Activated CD4-positive, alpha-beta memory T cell treated with anti-CD3 and anti-CD28 coated beads for 36 hours (primary cell): ENCODE measurements at regions of chr5 and their contacts with region 1.

Region 1: GRCh38 chr5:7868773-7869473 is at the starts of genes FASTKD3 and MTRR:
- DNase-seq: peak; percentile 93
- H3K4me3 Mint-ChIP-seq: peak within 1 kb of the TSS; percentile 94
- H3K27ac Mint-ChIP-seq: peak within 1 kb of the TSS; percentile 80
- H3K4me1 Mint-ChIP-seq: peaks cover 72% of the 10 kb centered on the region
- H3K27me3 Mint-ChIP-seq: no peaks in the 10 kb centered on the region
- total RNA-seq, gene FASTKD3: 6.9 to 7.5 TPM
- total RNA-seq, gene MTRR: 45.2 to 47.1 TPM

Region 2: DNA sequence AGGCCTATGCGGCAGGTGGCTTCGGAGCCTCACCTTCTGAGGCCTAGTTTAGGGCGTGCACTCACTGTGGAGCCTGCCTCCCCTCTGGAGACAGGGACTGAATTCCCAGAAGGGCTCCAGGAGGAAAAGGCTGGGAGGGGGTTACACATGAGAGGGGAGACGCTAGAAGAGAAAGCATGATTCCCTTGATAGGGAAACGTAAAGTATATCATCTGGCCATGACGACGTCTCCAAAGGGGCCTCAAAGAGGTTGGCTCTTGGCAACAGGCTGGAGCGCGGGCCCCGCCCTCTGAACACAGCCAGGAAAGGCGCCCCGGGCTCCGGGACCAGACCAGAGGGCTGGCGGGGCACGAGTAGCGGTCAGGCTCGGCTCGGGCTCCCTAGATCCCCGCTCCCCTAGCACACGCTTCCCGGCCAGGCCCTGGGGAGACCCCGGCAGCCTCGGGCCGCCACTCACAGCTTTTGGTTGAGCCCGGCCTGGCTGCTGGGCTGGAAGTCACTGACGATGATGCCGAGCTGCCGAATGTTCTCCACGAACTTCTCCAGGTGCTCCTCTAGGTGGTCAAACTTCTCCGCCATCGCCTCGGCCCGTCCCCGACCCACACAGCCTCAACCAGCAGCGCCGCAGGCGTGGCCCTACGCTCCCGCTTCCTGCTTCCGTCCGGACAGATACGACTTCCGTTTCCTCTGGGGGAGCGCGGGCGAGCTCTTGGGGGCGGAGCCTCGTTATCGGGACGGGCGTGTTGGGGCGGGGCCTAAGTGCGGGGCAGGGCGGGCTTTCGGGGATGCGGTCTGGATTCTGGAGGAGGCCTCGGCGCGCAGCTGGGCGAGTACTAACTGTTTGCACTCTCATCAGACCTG is 1490.8 kb before region 1 on chr5 and contains the start of gene MED10:
- CTCF ChIA-PET with region 1: no interaction called
- POLR2A ChIA-PET with region 1: no interaction called
- intact Hi-C with region 1: loop called (anchors 5 kb)
- DNase-seq: peak; percentile 98
- H3K4me3 Mint-ChIP-seq: peak within 1 kb of the TSS; percentile 92
- H3K27ac Mint-ChIP-seq: peak within 1 kb of the TSS; percentile 98
- H3K4me1 Mint-ChIP-seq: peaks cover 37% of the 10 kb centered on the region
- H3K27me3 Mint-ChIP-seq: no peaks in the 10 kb centered on the region
- total RNA-seq, gene MED10: 49.8 to 51.6 TPM

Region 3: GRCh38 chr5:6632917-6633468 is 1235.9 kb before region 1 on chr5 and contains the starts of genes NSUN2 and SRD5A1:
- CTCF ChIA-PET with region 1: no interaction called
- POLR2A ChIA-PET with region 1: no interaction called
- intact Hi-C with region 1: loop called (anchors 1 kb)
- DNase-seq: peak; percentile 92
- H3K4me3 Mint-ChIP-seq: peak within 1 kb of the TSS; percentile 97
- H3K27ac Mint-ChIP-seq: peak within 1 kb of the TSS; percentile 95
- H3K4me1 Mint-ChIP-seq: peaks cover 40% of the 10 kb centered on the region
- H3K27me3 Mint-ChIP-seq: no peaks in the 10 kb centered on the region
- total RNA-seq, gene NSUN2: 78.5 to 86.7 TPM
- total RNA-seq, gene SRD5A1: 9.5 to 11.0 TPM

Region 4: DNA sequence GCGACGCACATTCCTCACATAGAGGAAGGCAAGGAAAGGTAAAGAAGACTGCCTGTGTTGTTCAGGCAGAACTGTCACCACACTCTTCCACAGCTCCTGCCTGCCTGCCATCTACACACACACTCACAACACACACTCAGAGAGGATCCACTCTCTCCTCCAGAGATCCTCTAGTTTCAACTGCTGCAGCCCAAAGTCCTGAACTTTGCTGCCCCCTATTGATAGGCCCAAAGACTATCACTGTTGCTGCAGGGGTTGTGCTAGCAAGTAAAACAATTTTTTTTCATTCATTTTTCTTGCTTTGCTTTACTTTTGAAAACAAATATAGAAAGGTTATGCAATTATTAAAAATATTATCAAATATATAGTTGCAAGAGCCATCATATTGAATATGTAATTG is 12.1 kb before region 1 on chr5:
- CTCF ChIA-PET with region 1: interaction called, 21 read pairs
- POLR2A ChIA-PET with region 1: interaction called, 12 read pairs
- intact Hi-C with region 1: loop called (anchors 1 kb)
- DNase-seq: peak; percentile 52
- H3K4me3 Mint-ChIP-seq: no peak overlapping the region
- H3K27ac Mint-ChIP-seq: no peak overlapping the region
- H3K4me1 Mint-ChIP-seq: peaks cover 28% of the 10 kb centered on the region
- H3K27me3 Mint-ChIP-seq: no peaks in the 10 kb centered on the region

Region 5: DNA sequence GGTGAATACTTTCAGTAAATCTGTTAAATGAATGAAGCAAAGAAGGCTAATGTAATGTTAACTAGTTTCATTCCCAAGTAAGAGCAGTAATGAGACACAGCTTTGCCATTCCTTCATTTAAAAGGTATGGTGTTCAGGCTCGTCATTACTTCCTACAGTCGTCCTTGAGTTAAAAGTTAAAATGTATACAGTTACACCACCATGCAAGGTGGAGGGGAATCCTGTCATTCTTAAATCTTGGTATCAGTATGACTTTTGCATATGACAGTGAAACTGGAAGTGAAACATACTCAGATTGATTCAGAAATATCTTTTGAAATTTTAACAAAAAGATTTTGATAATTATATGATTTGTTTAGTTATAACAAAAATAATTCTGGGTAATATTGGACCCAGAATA is 25.9 kb after region 1 on chr5:
- CTCF ChIA-PET with region 1: no interaction called
- POLR2A ChIA-PET with region 1: interaction called, 4 read pairs
- intact Hi-C with region 1: loop called (anchors 2 kb)
- DNase-seq: no peak
- H3K4me3 Mint-ChIP-seq: no peak overlapping the region
- H3K27ac Mint-ChIP-seq: peak overlapping the region; percentile 10
- H3K4me1 Mint-ChIP-seq: peaks cover 8% of the 10 kb centered on the region
- H3K27me3 Mint-ChIP-seq: no peaks in the 10 kb centered on the region